Cardiac septum (tissue), 1 donor: ENCODE measurements at regions of chr19 and their contacts with region 1.

Region 1: DNA sequence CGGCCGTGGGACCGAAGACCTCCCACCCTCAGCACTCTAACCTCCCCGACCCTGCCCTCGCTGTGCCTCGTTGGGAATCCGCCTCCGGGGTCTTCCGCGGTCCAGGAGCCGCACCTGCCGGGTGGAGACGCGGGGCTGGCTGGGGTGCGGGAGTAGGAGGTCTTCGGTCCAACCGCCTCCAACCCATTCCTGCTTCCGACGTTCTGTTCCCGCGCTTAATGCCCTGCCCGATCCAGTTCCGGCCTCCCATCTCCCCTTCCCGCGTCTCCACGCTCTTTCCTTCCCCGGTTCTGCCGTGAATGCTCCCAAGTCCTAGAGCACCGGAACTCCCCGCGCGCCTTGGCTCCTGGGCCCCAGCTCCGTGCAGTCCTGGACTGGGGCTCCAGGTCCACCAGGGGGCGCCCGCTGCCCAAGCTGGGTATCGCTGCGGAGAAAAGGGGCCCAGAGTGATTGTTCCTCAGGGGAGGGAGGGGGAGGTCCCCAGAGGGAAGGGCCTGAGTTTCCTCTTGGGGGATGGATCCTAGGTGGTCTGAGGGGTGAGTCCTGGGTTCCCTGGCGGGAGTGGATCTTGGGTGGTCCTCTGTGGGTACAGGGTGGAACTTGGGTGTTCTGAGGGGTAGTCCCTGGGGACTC is 14.1 kb upstream of the TNFSF9 start:
- DNase-seq: peak; percentile 93

Region 2: DNA sequence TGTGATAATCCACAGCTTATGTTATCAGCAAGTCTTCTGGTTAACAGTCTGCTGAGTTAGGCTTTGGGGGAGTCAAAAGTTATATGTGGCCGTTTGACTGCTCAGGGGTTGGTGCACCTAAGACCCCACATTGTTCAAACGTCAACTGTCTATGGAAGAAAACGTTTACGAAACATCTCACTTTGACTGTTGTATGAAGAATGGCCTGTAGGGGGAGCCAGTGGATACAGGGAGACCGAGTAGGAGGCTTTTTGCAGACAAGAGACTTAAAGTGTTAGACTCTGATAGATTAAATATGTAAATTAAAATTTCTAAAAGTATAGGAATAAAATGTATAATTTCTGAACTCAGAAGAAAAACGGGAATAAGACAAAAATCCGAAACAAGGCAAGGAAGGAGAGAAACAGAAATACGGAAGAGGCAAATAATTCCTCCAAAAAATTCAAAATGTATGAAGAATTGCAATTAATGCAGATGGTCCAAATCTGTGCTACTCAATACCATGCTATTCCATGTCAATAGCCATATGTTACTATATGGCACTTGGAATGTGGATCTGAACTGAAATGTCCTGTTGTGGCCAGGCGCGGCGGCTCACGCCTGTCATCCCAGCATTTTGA is 115.3 kb after region 1 on chr19:
- intact Hi-C with region 1: loop called (anchors 1 kb)
- DNase-seq: no peak

Region 3: DNA sequence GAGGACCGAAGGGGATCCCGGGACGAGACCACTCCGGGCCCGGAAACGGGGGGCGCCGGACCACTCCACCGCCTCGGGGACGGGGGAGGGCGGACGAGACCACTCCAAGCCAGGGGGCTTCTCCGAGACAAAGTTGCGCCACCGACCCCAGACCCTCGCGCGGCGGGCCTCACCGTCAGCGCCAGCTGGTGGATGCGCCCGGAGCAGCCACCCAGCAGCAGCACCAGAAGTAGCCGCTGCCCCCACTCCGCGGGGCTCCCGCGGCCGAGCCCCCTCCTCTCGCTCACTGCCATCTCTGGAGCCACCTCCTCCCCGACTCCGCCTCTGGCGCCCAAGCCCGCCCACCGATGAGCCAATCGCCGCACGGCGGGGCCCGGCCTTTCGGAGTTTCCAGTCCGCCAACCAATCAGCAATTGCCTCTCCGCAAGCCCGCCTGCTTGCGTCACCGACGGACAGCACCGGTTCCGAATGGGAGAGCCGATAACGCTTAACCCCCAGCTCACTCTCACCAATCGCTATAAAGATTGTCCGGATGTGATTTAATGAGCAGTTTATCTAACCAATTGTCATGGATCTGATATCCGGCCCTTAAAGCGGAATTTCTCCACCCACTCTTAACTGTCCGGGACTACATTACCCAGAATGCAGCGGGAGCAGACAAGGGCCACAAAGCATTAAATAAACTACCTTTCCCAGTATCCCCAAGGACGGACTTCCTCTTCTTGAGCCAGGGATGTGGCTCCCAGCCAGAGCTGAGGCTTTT is 220.7 kb after region 1 on chr19 and contains the start of gene GPR108:
- intact Hi-C with region 1: loop called (anchors 5 kb)
- DNase-seq: peak; percentile 100
- total RNA-seq, gene GPR108: 22.5 TPM

Region 4: GRCh38 chr19:6862673-6863078 is 345.9 kb after region 1 on chr19:
- intact Hi-C with region 1: loop called (anchors 5 kb)
- DNase-seq: peak; percentile 87